Stomach (tissue), 19 donors: ENCODE measurements at regions of chr9 and their contacts with region 1.

Region 1: GRCh38 chr9:17802249-17802857 is 223.5 kb downstream of the SH3GL2 start:
- DNase-seq: no peak
- H3K4me3 ChIP-seq: no peak overlapping the region
- H3K27ac ChIP-seq: no peak overlapping the region
- H3K4me1 ChIP-seq: no peaks in the 10 kb centered on the region
- H3K27me3 ChIP-seq: no peaks in the 10 kb centered on the region
- CTCF ChIP-seq: peak in 5 of 7 experiments; percentile 13 to 52 (median 44)
- EP300 ChIP-seq: no peak
- POLR2A ChIP-seq: no peak

Region 2: DNA sequence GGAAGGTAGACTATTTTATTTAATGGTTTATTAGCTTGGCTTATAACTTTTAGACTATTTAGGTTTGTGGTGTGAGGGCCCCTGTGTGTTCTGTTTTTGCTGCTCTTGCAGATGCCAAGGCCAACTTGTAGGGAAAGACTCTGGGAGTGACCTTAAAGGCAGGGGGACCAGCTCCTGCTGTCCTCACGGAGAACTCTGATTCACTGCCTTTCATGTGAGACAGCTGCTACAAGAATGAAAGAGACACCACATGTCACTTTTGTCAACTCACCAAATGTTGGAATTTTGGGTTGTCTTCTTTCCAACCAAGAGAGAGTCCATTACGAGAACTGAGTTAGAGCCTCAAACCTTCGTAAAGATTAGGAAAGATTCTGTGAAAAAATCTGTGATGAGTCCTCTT is 413.3 kb after region 1 on chr9:
- intact Hi-C with region 1: loop called (anchors 10 kb)
- DNase-seq: no peak
- H3K4me3 ChIP-seq: no peak overlapping the region
- H3K27ac ChIP-seq: no peak overlapping the region
- H3K4me1 ChIP-seq: peaks cover 0 to 3% (median 0%) of the 10 kb centered on the region in 4 donors
- H3K27me3 ChIP-seq: no peaks in the 10 kb centered on the region
- CTCF ChIP-seq: no peak
- EP300 ChIP-seq: no peak
- POLR2A ChIP-seq: no peak